Common myeloid progenitor, CD34-positive (primary cell): ENCODE measurements at regions of chr6 and their contacts with region 1.

Region 1: GRCh38 chr6:57316581-57317059 is 810 bp upstream of the PRIM2 start:
- DNase-seq: peak; percentile 90 to 95 (median 94)
- H3K4me3 ChIP-seq: peak overlapping the region; percentile 40 to 100 (median 94)
- H3K27ac ChIP-seq: peak overlapping the region; percentile 51 to 78
- H3K4me1 ChIP-seq: peaks cover 0 to 14% (median 9%) of the 10 kb centered on the region in 4 experiments
- H3K27me3 ChIP-seq: no peaks in the 10 kb centered on the region

Region 2: DNA sequence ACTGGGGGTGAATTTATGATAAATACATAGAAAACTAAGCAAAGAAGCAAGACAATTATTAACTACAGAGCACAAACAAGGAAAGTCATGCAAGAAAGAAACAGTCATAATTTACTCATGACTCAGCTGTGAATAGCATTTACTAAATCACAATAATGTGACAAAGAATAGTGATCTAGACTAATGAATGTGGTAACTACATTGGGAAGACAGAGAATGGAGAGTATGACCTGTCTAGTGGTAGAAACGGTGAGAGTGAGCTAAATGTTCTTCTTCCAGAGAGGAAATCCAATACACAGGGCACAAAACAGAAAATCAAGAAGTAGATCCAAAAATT is 520.5 kb before region 1 on chr6:
- CTCF ChIA-PET with region 1: no interaction called
- POLR2A ChIA-PET with region 1: no interaction called
- DNase-seq: no peak
- H3K4me3 ChIP-seq: no peak overlapping the region
- H3K27ac ChIP-seq: no peak overlapping the region
- H3K4me1 ChIP-seq: peaks cover 0 to 2% (median 0%) of the 10 kb centered on the region in 4 experiments
- H3K27me3 ChIP-seq: no peaks in the 10 kb centered on the region

Region 3: GRCh38 chr6:57190140-57190539 is 126.5 kb before region 1 on chr6:
- CTCF ChIA-PET with region 1: interaction called, 30 read pairs
- POLR2A ChIA-PET with region 1: no interaction called
- DNase-seq: peak in 2 of 3 donors; percentile 42 to 43
- H3K4me3 ChIP-seq: no peak overlapping the region
- H3K27ac ChIP-seq: no peak overlapping the region
- H3K4me1 ChIP-seq: no peaks in the 10 kb centered on the region
- H3K27me3 ChIP-seq: no peaks in the 10 kb centered on the region

Region 4: GRCh38 chr6:57267586-57268293 is 48.9 kb before region 1 on chr6:
- CTCF ChIA-PET with region 1: interaction called, 18 read pairs
- POLR2A ChIA-PET with region 1: no interaction called
- DNase-seq: peak; percentile 53 to 69 (median 64)
- H3K4me3 ChIP-seq: no peak overlapping the region
- H3K27ac ChIP-seq: no peak overlapping the region
- H3K4me1 ChIP-seq: no peaks in the 10 kb centered on the region
- H3K27me3 ChIP-seq: no peaks in the 10 kb centered on the region

Region 5: DNA sequence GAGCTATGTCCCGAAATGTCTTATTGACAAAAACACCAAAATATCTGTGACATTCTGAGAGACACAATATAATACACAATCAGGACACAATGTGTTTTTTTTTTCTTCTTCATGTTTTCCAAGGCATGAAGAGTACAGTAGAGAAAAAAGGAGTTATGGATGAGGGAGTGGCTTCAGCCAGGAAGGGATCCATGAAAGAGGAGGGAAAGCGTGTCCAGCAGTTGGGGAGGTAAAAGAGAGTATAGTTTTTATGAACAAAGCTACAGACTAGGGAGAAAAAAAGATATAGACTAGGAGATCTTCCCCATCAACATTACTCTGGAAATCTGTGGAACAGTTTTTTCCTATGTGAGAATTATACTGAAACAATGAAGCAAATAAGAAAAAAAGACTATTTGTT is 38.0 kb before region 1 on chr6:
- CTCF ChIA-PET with region 1: no interaction called
- POLR2A ChIA-PET with region 1: no interaction called
- DNase-seq: no peak
- H3K4me3 ChIP-seq: no peak overlapping the region
- H3K27ac ChIP-seq: no peak overlapping the region
- H3K4me1 ChIP-seq: no peaks in the 10 kb centered on the region
- H3K27me3 ChIP-seq: peaks cover 0 to 2% (median 0%) of the 10 kb centered on the region in 5 experiments

Region 6: DNA sequence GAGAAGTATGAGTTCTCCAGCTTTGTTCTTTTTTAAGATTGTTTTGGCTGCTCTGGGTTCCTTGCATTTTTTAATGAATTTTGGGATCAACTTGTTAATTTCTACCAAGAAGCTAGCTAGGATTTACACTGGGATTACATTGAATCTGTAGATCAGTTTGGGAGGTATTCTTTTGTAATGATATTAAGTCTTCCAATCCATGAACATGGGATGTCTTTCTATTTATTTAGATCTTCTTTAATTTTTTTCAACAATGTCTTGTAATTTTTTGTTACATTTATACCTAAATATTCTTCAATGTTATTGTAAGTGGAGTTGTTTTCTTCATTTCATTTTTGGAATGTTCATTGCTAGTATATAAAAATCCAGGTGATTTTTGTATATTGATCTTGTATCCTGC is 13.3 kb after region 1 on chr6:
- CTCF ChIA-PET with region 1: no interaction called
- POLR2A ChIA-PET with region 1: no interaction called
- DNase-seq: peak in 2 of 3 donors; percentile 7 to 15
- H3K4me3 ChIP-seq: no peak overlapping the region
- H3K27ac ChIP-seq: no peak overlapping the region
- H3K4me1 ChIP-seq: no peaks in the 10 kb centered on the region
- H3K27me3 ChIP-seq: no peaks in the 10 kb centered on the region